ENCODE measurements at regions of chr1 and their contacts with region 1.

Region 1: GRCh38 chr1:50405814-50406213 is 17.4 kb downstream of the DMRTA2 start:
- DNase-seq: no peak
- H3K4me3 ChIP-seq: no peak overlapping the region
- CTCF ChIP-seq: no peak
- POLR2A ChIP-seq: no peak

Region 2: DNA sequence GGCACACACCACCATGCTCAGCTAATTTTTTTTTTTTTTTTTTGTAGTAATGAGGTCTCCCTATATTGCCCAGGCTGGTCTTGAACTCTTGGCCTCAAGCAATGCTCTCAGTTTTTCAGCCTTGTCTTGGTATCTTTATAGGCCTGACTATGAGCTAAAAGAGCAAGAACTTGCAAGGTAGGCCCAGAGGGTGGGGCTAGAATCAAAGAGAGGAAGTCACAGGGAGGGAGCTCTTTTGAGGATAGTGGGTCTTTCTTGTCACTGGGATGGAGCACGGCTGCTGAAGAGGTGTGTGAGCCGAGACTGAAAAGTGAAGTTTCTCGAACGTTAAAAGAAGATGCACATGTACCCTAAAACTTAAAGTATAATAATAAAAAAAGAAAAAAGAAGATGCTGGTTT is 1369.1 kb before region 1 on chr1:
- intact Hi-C with region 1: loop called (anchors 5 kb)
- DNase-seq: no peak
- H3K4me3 ChIP-seq: no peak overlapping the region
- CTCF ChIP-seq: no peak
- POLR2A ChIP-seq: no peak

Measured in lower leg skin (tissue), 4 donors.